ENCODE measurements at regions of chr2 and their contacts with region 1.

Region 1: GRCh38 chr2:197399887-197400540 is 34.8 kb downstream of the SF3B1 start:
- DNase-seq: no peak
- ATAC-seq: no peak
- H3K4me3 ChIP-seq: no peak overlapping the region
- H3K27ac ChIP-seq: no peak overlapping the region
- H3K4me1 ChIP-seq: no peaks in the 10 kb centered on the region
- H3K27me3 ChIP-seq: no peaks in the 10 kb centered on the region
- CTCF ChIP-seq: no peak

Region 2: GRCh38 chr2:196783431-196784094 is 616.5 kb before region 1 on chr2:
- intact Hi-C with region 1: loop called (anchors 5 to 10 kb)
- DNase-seq: no peak
- ATAC-seq: no peak
- H3K4me3 ChIP-seq: no peak overlapping the region
- H3K27ac ChIP-seq: no peak overlapping the region
- H3K4me1 ChIP-seq: no peaks in the 10 kb centered on the region
- H3K27me3 ChIP-seq: no peaks in the 10 kb centered on the region
- CTCF ChIP-seq: no peak

Region 3: DNA sequence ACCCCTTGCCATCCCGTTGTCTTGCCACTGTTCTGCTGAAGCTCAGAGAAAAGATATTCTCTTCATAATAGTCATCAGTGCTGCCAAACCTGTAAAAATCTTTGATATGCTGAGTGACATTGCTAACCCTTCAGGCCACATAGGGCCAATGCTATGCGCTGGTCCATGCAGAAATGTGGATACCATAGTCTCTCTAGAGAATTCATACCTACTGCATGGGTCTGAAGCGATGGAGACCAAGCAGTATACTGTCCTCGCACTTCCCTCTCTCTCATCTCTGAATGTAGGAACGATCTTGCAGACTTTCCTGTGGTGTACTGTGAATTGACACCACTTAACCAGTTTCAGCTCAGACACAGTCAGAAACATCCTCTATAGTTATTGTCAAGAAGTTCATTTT is 71.6 kb before region 1 on chr2:
- intact Hi-C with region 1: no loop called
- DNase-seq: no peak
- ATAC-seq: no peak
- H3K4me3 ChIP-seq: no peak overlapping the region
- H3K27ac ChIP-seq: no peak overlapping the region
- H3K4me1 ChIP-seq: no peaks in the 10 kb centered on the region
- H3K27me3 ChIP-seq: no peaks in the 10 kb centered on the region
- CTCF ChIP-seq: no peak

Region 4: DNA sequence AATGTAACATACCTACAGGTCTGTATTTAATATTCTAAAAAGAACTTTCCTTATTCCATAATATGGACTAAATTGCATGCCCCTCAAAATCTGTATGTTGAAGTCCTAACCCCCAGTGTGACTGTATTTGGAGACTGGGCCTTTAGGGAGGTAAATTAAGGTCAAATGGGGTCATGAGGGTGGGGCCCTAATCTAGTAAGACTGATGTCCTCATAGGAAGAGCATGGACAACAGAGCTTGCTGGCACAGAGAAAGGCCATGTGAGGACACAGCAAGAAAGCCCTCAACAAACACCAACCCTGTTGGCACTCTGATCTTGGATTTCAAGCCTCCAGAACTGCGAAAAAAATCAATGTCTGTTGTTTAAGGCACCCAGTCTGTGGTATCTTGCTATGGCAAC is 16.3 kb after region 1 on chr2:
- intact Hi-C with region 1: loop called in 1 of 2 experiments (anchors 2 kb)
- DNase-seq: no peak
- ATAC-seq: no peak
- H3K4me3 ChIP-seq: no peak overlapping the region
- H3K27ac ChIP-seq: no peak overlapping the region
- H3K4me1 ChIP-seq: no peaks in the 10 kb centered on the region
- H3K27me3 ChIP-seq: no peaks in the 10 kb centered on the region
- CTCF ChIP-seq: no peak

Region 5: DNA sequence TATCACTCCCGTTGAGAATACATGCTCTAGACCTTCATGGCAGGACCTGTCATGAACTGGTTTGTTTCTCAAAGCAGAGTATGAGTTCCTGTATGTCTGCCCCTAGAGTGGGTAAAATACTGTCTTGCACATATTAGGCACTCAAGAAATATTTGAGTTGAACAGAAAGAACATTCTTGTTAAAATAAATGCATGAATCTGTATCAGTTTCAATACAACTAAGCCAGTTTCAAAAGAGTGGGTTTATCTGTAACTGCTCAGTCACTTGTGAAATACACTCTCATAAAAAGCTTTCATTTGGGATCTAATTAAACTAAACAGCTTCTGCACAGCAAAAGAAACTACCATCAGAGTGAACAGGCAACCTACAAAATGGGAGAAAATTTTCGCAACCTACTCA is 206.2 kb after region 1 on chr2:
- intact Hi-C with region 1: no loop called
- DNase-seq: no peak
- ATAC-seq: no peak
- H3K4me3 ChIP-seq: no peak overlapping the region
- H3K27ac ChIP-seq: no peak overlapping the region
- H3K4me1 ChIP-seq: no peaks in the 10 kb centered on the region
- H3K27me3 ChIP-seq: no peaks in the 10 kb centered on the region
- CTCF ChIP-seq: no peak